Endothelial cell of umbilical vein (primary cell): ENCODE measurements at regions of chr2 and their contacts with region 1.

Region 1: DNA sequence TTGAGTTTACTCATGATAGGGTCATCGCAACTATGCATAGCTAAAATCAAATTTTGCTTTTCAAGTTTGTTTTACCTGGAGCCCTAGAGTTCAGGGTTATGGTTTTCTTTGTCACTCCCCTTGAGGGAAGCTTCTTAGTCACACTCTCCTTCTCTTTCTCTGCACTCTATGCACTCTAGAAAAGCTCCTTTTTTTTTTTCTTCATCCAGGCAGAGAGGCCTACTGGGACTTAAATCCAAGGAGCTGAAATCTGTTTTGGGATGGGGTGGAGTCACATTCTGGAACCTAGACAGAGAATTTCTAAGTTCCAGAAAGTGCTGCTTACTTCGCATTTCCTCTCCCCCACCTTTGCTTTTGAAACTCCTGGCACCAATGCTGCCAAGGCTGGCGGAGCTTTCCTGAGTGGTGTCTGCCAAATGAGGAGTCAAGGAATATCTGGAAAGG is 19.1 kb upstream of the IL18R1 start:
- DNase-seq: peak; percentile 68
- H3K4me3 ChIP-seq: peak overlapping the region in 2 of 3 experiments; percentile 74 to 95
- H3K27ac ChIP-seq: peak overlapping the region; percentile 99
- H3K4me1 ChIP-seq: peaks cover 56% of the 10 kb centered on the region
- H3K27me3 ChIP-seq: no peaks in the 10 kb centered on the region
- CTCF ChIP-seq: no peak
- POLR2A ChIP-seq: no peak

Region 2: GRCh38 chr2:102258386-102259074 is 78.0 kb before region 1 on chr2:
- CTCF ChIA-PET with region 1: interaction called, 4 read pairs
- POLR2A ChIA-PET with region 1: no interaction called
- dilution Hi-C with region 1: no loop called
- intact Hi-C with region 1: loop called (anchors 5 kb)
- DNase-seq: peak; percentile 78
- H3K4me3 ChIP-seq: no peak overlapping the region
- H3K27ac ChIP-seq: peak overlapping the region; percentile 35
- H3K4me1 ChIP-seq: peaks cover 15% of the 10 kb centered on the region
- H3K27me3 ChIP-seq: no peaks in the 10 kb centered on the region
- CTCF ChIP-seq: no peak
- POLR2A ChIP-seq: no peak

Region 3: GRCh38 chr2:102313025-102313424 is 23.5 kb before region 1 on chr2:
- CTCF ChIA-PET with region 1: interaction called, 13 read pairs
- POLR2A ChIA-PET with region 1: no interaction called
- dilution Hi-C with region 1: no loop called
- intact Hi-C with region 1: loop called (anchors 2 kb)
- DNase-seq: peak; percentile 67
- H3K4me3 ChIP-seq: no peak overlapping the region
- H3K27ac ChIP-seq: peak overlapping the region; percentile 54
- H3K4me1 ChIP-seq: peaks cover 41% of the 10 kb centered on the region
- H3K27me3 ChIP-seq: no peaks in the 10 kb centered on the region
- CTCF ChIP-seq: no peak
- POLR2A ChIP-seq: no peak

Region 4: DNA sequence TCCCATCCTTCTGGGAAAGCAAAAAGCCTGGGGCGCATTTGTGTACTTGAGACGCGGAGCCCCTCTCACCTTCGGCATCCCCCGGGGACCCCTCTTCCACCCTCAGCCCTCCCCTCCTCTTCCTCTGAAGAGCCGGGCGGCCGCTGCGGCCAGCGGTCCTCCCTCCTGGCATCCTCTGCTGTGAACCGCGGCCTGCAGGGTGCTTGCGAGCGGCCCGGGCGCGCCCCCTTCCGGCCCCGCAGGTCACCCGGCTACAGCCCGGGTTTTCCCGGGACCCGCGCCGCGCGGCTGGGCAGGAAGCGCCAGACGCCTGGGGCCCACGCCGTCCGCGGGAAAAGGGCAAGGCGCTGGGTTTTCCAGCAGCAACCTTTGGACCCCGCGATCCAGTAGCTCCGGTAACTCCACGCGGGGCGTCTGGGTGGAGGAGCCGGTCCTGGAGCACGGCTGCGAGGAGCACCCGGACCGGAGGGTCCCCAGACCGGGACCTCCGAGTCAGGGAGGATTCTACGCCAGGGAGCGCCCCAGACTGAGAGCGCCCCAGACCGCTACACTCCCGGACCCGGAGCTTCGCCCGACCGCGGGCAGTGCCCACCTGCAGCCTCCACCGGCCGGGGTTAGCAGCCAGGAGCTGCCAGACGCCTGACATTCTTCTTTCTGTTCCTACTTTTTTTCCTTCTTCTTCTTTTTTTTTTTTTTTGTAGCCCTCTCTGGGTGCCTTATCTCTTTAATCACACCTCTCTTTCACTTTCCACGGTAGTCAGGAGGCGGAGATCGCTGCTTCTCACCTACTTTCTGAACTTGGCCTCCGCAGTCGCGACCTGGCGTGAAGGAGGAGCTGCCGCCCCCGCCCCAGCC is 19.2 kb after region 1 on chr2 and contains the start of gene IL18R1:
- CTCF ChIA-PET with region 1: interaction called, 7 read pairs
- POLR2A ChIA-PET with region 1: interaction called, 5 read pairs
- dilution Hi-C with region 1: no loop called
- intact Hi-C with region 1: loop called (anchors 1 kb)
- DNase-seq: peak; percentile 71
- H3K4me3 ChIP-seq: peak within 1 kb of the TSS; percentile 70 to 88 (median 79)
- H3K27ac ChIP-seq: peak within 1 kb of the TSS; percentile 63
- H3K4me1 ChIP-seq: peaks cover 13% of the 10 kb centered on the region
- H3K27me3 ChIP-seq: no peaks in the 10 kb centered on the region
- CTCF ChIP-seq: peak; percentile 72 to 84
- POLR2A ChIP-seq: no peak
- total RNA-seq, gene IL18R1: 3.6 and 4.0 TPM in 2 replicates

Region 5: DNA sequence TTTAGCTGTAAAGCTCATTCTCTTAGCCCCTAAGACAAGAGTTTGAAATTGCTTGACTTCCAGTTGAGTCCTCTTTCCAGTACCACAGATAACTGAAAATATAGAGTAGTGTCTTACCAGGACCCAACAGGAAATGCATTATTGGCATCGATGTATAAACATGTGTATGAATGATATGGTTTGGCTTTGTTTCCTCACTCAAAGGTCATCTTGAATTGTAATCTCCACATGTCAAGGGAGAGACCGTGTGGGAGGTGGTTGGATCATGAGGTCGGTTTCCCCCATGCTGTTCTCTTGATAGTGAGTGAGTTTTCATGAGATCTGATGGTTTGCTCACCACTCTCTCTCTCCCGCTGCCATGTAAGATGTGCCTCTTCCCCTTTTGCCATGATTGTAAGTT is 1170.3 kb after region 1 on chr2:
- CTCF ChIA-PET with region 1: no interaction called
- POLR2A ChIA-PET with region 1: no interaction called
- dilution Hi-C with region 1: no loop called
- intact Hi-C with region 1: no loop called
- DNase-seq: no peak
- H3K4me3 ChIP-seq: no peak overlapping the region
- H3K27ac ChIP-seq: no peak overlapping the region
- H3K4me1 ChIP-seq: no peaks in the 10 kb centered on the region
- H3K27me3 ChIP-seq: no peaks in the 10 kb centered on the region
- CTCF ChIP-seq: no peak
- POLR2A ChIP-seq: no peak